ENCODE measurements at regions of chr5 and their contacts with region 1.

Region 1: DNA sequence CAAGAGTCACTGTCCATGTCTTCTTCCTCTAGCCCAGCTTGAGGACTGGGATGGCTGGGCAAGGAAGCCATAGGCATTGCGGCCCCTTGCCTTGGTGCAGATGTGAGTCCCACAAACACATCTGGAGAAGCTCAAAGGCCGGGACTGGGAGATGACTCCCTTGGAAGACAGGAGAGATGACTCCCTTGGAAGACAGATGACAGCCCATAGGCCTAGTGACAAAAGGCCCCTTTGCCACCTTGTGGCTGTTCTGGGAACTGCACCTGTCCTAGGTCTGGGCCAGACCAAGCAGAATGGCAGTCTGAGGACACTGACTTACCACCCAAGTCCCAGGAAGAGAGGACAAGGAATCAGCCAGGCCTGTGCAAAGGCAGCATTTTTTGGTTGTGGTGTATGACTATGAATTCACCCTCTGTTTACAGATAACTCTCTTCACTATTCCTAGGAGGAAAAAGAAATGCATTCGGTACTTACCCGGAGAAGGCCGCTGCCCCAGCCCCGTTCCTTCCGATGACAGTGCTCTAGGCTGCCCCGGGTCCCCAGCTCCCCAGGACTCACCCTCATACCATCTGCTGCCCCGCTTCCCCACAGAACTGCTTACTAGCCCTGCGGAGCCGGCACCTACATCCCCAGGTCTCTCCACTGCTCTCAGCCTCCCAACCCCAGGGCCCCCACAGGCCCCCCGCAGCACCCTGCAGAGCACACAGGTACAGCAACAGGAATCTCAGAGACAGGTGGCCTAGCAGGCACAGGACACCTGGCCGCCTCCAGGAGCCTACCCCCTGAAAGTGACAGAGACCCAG is 30.8 kb downstream of the SKP1 start:
- DNase-seq: peak; percentile 71 to 87 (median 76)
- H3K4me3 ChIP-seq: no peak overlapping the region
- H3K4me3 Mint-ChIP-seq: peak overlapping the region in 2 of 7 donors; percentile 26 to 57
- H3K27ac ChIP-seq: no peak overlapping the region
- H3K27ac Mint-ChIP-seq: peak overlapping the region; percentile 80 to 97 (median 90)
- H3K4me1 ChIP-seq: peaks cover 19% of the 10 kb centered on the region
- H3K4me1 Mint-ChIP-seq: peaks cover 30 to 80% (median 56%) of the 10 kb centered on the region in 3 donors
- H3K27me3 ChIP-seq: no peaks in the 10 kb centered on the region
- H3K27me3 Mint-ChIP-seq: no peaks in the 10 kb centered on the region

Region 2: DNA sequence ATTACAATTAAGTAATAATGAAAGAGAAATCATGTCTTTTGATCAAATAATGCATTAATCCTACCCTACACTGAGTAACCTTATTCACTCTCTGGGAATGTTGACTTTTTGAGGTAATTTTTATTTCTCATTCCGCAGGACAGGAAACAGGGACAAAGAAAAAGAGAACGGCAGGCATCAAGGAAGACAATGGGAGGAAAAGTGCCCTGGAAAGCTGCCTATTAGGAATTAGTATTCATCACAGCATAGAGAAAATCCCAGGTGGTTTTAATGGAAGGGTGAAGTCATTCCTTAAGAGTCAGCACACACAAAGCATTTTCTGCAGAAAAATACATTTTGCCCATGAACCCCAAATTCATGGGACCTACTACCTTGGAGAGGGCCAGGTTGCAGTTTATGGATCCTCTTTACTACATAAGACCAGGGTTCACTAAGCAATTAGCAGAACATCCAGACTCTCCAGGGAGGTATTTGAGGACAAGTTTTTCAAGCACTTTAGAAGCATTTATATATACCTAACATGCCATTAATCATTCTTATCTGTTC is 543.1 kb before region 1 on chr5:
- CTCF ChIA-PET with region 1: no interaction called
- POLR2A ChIA-PET with region 1: no interaction called
- DNase-seq: no peak
- H3K4me3 ChIP-seq: no peak overlapping the region
- H3K4me3 Mint-ChIP-seq: no peak overlapping the region
- H3K27ac ChIP-seq: no peak overlapping the region
- H3K27ac Mint-ChIP-seq: no peak overlapping the region
- H3K4me1 ChIP-seq: no peaks in the 10 kb centered on the region
- H3K4me1 Mint-ChIP-seq: no peaks in the 10 kb centered on the region
- H3K27me3 ChIP-seq: no peaks in the 10 kb centered on the region
- H3K27me3 Mint-ChIP-seq: peaks cover 11 to 39% of the 10 kb centered on the region in 2 donors

Region 3: GRCh38 chr5:134132372-134133034 is 13.5 kb before region 1 on chr5:
- CTCF ChIA-PET with region 1: interaction called, 40 read pairs
- POLR2A ChIA-PET with region 1: interaction called, 15 read pairs
- DNase-seq: peak; percentile 78 to 95 (median 93)
- H3K4me3 ChIP-seq: peak overlapping the region; percentile 72
- H3K4me3 Mint-ChIP-seq: peak overlapping the region; percentile 72 to 99 (median 94)
- H3K27ac ChIP-seq: peak overlapping the region; percentile 78
- H3K27ac Mint-ChIP-seq: peak overlapping the region; percentile 92 to 100 (median 98)
- H3K4me1 ChIP-seq: peaks cover 100% of the 10 kb centered on the region
- H3K4me1 Mint-ChIP-seq: peaks cover 92 to 99% (median 99%) of the 10 kb centered on the region in 3 donors
- H3K27me3 ChIP-seq: no peaks in the 10 kb centered on the region
- H3K27me3 Mint-ChIP-seq: no peaks in the 10 kb centered on the region